ENCODE measurements at regions of chr5 and their contacts with region 1.

Region 1: DNA sequence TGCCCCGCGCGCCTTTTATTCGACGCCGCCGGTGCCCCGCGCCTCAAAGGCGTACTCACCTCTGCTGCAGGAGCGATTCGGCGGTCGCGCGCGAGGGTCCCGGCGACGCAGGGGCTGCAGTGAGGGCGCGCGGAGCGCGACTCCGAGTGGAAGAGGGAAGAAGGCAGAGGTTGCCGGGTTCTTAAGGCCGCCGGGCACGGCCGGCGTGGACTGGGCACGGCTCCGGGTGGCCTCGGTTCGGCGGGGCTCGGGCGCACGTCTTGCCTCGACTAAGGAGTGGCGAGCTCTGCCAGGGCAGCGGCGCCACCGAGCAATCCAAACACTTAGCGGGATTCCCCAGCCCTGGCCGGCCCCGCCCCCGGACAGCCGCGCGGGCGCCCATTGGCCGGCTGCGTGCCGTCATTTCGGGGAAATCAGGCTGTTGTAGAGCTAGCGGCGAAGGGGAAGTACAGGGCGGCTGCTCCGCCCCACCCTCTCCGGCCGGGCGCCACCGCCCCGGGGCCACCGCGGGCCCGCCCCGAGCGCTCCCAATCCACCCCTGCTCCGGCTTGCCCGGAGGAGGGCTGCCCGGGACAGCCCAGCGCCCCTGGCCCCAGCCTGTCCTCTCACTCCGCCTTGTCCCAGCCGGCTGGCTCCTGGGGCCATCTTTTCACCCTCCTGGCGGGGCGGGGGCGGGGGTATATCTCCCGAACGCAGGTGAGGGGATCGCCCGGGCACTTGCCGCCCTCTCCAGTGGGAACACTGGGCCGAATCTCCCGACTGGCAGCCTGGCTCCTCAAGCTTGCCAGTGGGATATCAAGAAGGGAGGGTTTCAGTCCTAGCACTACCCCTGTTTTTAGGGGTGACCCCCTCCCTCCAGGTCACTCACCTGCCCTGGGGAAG is at the start of gene IRF1:
- DNase-seq: no peak
- H3K4me3 ChIP-seq: peak within 1 kb of the TSS; percentile 92
- CTCF ChIP-seq: peak; percentile 29

Region 2: DNA sequence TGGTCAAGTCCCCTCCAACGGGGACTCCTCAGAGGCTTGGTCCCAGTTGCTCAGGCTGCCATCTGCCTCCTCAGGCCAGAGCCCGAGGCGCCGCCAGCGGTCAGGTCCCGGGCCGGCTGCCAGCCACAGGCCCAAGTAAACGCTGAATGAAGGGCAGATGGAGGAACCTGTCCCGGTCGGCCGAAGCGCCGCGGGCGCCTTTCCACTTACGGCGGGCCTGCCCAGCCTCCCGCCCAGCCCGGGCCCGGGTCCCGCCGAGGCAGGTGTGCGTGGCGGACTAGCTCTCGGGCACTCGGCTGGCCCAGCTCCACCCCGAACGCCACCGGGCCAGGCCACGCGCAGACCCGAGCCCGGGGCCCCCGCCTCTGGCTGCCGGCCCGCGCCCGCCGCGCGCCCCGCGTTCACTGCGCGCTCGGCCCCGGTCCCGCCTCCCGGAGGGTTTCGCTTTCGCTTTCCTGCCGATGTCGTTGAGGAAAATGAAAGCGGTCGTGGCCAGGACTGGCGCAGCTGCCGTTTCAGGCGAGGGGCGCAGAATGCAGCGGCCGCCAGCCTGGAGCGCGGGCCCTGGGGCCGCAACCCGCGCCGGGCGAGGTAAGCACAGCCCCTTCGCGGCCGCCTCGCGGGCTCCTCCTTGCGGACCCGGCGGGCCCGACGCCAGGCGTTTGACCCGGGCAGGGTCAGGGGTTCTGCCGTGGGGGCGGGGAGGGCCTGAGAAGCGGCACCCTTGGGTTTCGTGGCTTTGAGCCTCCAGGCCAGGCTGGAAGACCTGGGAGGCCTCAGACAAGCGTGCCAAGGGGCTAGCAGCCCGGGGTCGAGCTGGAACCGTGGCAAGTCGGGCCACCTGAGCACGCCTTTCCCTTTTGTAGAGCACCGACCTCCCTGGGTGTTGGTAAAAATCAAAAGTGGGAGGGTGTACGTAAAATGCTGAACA is 80.0 kb before region 1 on chr5:
- CTCF ChIA-PET with region 1: interaction called, 90 read pairs
- POLR2A ChIA-PET with region 1: interaction called, 14 read pairs
- DNase-seq: no peak
- H3K4me3 ChIP-seq: peak overlapping the region; percentile 69
- CTCF ChIP-seq: peak; percentile 65

Region 3: GRCh38 chr5:132437604-132438266 is 53.0 kb before region 1 on chr5:
- CTCF ChIA-PET with region 1: interaction called, 4 read pairs
- POLR2A ChIA-PET with region 1: interaction called, 15 read pairs
- DNase-seq: peak; percentile 85
- H3K4me3 ChIP-seq: no peak overlapping the region
- CTCF ChIP-seq: no peak

Region 4: DNA sequence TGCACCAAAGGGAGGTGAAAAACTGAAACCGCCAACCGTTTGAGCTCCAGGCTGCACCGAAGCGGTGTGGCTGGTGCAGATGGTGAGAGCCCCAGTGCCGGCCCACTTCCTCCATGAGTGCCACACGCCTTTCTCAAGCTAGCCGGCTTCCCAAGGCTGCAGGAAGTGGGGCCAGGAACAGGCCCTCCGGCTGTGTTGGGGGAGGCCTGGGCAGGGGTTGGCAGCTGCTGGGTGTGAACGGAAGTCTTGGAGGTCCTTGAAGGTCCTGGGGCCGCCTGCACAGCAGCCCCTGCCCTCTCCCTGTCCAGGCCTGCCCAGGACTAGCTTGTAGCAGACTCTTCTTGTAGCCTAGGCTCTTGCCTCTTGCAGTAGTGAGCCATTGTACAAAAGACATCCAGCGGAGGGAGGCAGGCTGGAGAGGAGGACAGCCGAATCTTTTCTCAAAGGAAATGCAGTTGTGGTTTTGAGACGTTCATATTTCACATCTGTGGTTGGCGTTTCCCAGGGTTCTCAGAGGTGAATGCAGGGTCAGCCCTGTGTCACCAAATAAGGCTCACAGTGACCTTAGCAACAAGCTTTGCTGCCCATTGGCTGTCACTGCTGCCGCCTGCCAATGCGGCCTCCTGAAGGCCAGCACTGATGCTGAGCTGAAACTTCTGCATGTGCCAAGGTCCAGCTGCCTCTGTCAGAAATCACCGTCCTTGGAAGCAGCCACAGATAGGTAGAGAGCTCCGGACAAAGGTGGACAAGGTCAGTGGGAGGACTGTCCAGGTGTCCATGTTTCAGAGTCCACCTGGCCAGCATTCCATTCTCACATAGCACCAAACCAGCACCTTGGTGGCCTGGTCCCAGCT is 24.1 kb before region 1 on chr5:
- CTCF ChIA-PET with region 1: interaction called, 11 read pairs
- POLR2A ChIA-PET with region 1: interaction called, 8 read pairs
- DNase-seq: no peak
- H3K4me3 ChIP-seq: no peak overlapping the region
- CTCF ChIP-seq: no peak

Region 5: DNA sequence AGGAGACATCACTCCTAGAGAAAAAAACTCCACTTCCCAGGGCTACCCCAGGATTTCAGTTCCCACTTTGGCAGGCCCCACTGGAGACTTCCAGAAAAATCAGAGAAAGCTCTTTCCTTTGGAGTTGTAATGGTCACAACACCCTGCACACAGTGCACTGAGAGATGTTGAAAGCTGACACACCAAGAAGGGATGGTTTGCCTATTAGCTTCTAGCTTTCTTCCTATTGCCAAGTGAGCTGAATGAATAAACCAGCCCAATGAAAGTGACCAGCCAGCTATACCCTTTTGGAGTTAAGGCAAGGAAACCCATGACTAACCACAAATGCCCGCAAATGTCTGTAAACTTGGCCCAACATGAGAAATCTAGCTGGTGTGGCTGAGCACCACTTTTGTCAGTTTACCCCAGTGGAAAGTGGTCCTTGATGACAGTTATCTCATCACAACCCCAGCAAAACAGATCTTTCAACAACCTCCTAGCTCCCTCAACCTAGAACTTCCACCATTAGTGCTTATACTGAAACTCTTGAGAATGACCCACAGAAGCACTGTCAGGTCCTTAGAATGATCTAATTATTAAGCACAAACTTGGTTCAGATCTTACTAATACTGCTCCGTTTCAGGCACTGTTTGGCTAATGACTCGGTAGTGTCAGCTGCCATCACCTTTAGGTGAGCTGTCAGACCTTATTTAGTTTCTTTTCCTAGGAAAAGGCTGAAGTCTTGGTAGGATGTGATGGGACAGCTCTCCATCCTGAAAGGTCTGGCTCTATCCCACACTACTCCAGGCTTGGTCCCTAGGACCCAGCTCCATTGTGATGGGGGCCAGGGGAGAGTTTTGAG is 11.4 kb before region 1 on chr5:
- CTCF ChIA-PET with region 1: interaction called, 37 read pairs
- POLR2A ChIA-PET with region 1: interaction called, 34 read pairs
- DNase-seq: no peak
- H3K4me3 ChIP-seq: no peak overlapping the region
- CTCF ChIP-seq: no peak

Region 6: GRCh38 chr5:132506094-132506692 is 15.5 kb after region 1 on chr5:
- CTCF ChIA-PET with region 1: interaction called, 56 read pairs
- POLR2A ChIA-PET with region 1: interaction called, 12 read pairs
- DNase-seq: peak; percentile 93
- H3K4me3 ChIP-seq: 0 out of 2 replicates have a peak overlapping the region, but pooled peaks have one; percentile 8
- CTCF ChIP-seq: peak; percentile 79

Region 7: GRCh38 chr5:132561601-132562000 is 70.9 kb after region 1 on chr5:
- CTCF ChIA-PET with region 1: no interaction called
- POLR2A ChIA-PET with region 1: no interaction called
- DNase-seq: no peak
- H3K4me3 ChIP-seq: no peak overlapping the region
- CTCF ChIP-seq: no peak

Measured in AG04449 (cell line).